Endothelial cell of umbilical vein (primary cell): ENCODE measurements at regions of chr3 and their contacts with region 1.

Region 1: GRCh38 chr3:32667122-32667521 is 17.9 kb upstream of the CNOT10 start:
- DNase-seq: no peak
- H3K4me3 ChIP-seq: no peak overlapping the region
- H3K27ac ChIP-seq: no peak overlapping the region
- H3K4me1 ChIP-seq: no peaks in the 10 kb centered on the region
- H3K27me3 ChIP-seq: peaks cover 7 to 10% of the 10 kb centered on the region in 2 experiments
- CTCF ChIP-seq: no peak
- POLR2A ChIP-seq: no peak

Region 2: GRCh38 chr3:32296256-32297204 is 370.6 kb before region 1 on chr3:
- CTCF ChIA-PET with region 1: interaction called, 6 read pairs
- POLR2A ChIA-PET with region 1: no interaction called
- dilution Hi-C with region 1: no loop called
- intact Hi-C with region 1: loop called (anchors 1 kb)
- DNase-seq: peak; percentile 68
- H3K4me3 ChIP-seq: no peak overlapping the region
- H3K27ac ChIP-seq: no peak overlapping the region
- H3K4me1 ChIP-seq: peaks cover 3% of the 10 kb centered on the region
- H3K27me3 ChIP-seq: no peaks in the 10 kb centered on the region
- CTCF ChIP-seq: peak; percentile 80 to 86
- POLR2A ChIP-seq: no peak

Region 3: DNA sequence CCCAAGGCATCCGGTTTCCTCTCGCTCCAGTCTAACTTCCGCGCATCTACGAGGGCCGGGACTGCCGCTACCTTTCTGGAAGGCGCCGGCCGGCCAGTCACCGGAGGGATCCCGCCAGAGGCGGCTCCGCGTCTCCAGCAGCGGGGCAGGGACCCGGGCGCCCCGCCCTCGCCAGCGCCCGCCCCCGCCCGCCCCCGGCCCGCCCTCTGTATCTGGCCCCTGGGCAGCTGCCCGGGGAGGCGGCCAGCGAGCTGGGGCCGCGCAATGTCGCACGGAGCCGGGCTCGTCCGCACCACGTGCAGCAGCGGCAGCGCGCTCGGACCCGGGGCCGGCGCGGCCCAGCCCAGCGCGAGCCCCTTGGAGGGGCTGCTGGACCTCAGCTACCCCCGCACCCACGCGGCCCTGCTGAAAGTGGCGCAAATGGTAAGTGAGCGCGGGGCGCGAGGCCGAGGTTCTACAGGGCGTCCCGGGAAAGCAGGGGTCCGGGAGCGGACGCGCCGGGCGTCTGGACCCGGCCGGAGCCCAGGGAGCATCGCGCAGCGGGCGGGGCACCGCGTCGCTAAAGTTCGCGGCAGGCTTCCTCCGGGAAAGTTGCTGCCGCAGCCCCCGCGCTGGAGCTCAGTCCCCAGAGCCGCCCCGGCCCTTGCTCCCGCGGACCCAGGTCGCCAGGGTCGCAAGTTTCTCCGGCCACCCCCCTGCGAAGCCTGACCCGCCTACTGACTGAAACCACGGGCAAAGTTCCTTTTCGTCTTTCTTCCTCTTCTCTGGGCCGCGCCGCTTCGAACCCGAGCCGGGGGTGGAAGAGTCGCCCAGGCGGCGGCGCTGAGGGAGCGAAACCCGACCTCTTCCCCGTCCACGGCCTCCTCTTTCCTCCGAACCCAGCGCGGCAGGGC is 275.2 kb before region 1 on chr3 and contains the start of gene CMTM7:
- CTCF ChIA-PET with region 1: no interaction called
- POLR2A ChIA-PET with region 1: no interaction called
- dilution Hi-C with region 1: no loop called
- intact Hi-C with region 1: loop called (anchors 5 kb)
- DNase-seq: peak; percentile 65
- H3K4me3 ChIP-seq: peak within 1 kb of the TSS; percentile 67 to 94 (median 82)
- H3K27ac ChIP-seq: peak within 1 kb of the TSS; percentile 77
- H3K4me1 ChIP-seq: peaks cover 14% of the 10 kb centered on the region
- H3K27me3 ChIP-seq: no peaks in the 10 kb centered on the region
- CTCF ChIP-seq: no peak
- POLR2A ChIP-seq: peak; percentile 93
- total RNA-seq, gene CMTM7: 44.7 and 47.1 TPM in 2 replicates

Region 4: DNA sequence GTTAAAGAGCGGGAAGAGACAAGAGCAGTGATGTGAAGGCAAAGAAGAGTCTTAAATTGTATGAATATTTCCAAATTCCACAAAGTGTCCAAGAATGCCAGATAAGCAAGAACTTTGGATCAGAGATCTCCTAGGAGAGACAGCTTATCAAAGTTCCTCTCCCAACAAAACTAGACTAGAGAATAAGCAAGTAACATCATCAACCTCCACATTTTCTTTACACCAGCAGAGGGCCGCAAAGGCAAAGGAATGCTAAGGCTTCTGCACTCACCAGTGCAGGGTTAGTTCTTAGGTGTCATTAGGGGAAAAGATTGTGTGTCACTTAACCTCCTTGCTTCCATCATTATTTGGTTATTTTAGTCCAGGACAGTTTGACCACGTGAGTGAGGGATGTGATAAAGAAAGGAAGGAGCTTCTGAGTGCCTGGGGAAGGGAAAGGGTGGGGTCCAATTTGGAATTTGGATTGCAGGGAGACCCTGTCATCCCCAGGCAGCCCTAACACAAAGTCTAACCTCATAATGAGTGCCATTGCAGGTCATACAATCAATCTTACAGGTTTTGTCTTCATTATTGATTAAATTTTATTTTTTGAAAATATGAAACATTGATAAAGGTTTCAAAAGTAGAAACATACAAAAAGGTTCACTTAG is 156.9 kb before region 1 on chr3:
- CTCF ChIA-PET with region 1: interaction called, 18 read pairs
- POLR2A ChIA-PET with region 1: no interaction called
- dilution Hi-C with region 1: no loop called
- intact Hi-C with region 1: loop called (anchors 1 kb)
- DNase-seq: peak; percentile 69
- H3K4me3 ChIP-seq: no peak overlapping the region
- H3K27ac ChIP-seq: no peak overlapping the region
- H3K4me1 ChIP-seq: no peaks in the 10 kb centered on the region
- H3K27me3 ChIP-seq: no peaks in the 10 kb centered on the region
- CTCF ChIP-seq: peak; percentile 58 to 64
- POLR2A ChIP-seq: no peak